ENCODE measurements at regions of chr11 and their contacts with region 1.

Region 1: DNA sequence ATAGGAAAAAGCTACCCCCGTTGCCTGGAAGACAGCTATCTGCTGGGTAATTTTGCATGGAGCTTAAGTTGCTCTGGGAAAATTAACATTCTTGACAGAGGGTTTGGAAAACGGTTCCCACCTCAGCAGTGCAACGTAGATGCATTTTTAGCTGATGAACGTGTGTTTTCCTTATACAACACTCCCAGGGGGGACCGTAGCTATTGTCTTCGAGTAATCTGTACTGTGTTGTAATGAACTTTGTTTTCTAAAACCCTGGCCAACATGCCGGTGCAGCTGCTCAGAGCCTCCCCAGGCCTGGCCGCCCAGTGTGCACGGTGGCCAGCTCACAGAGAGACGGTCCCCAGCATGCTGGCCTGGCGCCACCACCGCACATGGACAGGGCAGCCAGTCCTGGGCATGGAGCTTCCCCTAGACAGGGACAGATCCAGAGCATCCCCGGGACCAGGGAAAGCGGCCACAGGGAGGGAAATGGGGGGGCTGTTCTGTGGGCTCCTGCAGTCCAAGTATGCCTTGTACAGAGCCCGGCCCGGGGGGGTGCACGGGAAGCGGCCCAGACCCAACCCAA is 2.2 kb downstream of the TNNT3 start:
- DNase-seq: no peak
- ATAC-seq: no peak
- H3K4me3 ChIP-seq: no peak overlapping the region
- H3K4me3 Mint-ChIP-seq: no peak overlapping the region
- H3K27ac ChIP-seq: no peak overlapping the region
- H3K27ac Mint-ChIP-seq: no peak overlapping the region
- H3K4me1 ChIP-seq: peaks cover 20% of the 10 kb centered on the region
- H3K4me1 Mint-ChIP-seq: peaks cover 5 to 33% of the 10 kb centered on the region in 2 donors
- H3K27me3 ChIP-seq: peaks cover 2% of the 10 kb centered on the region
- H3K27me3 Mint-ChIP-seq: peaks cover 0 to 12% of the 10 kb centered on the region in 2 donors
- CTCF ChIP-seq: no peak

Region 2: DNA sequence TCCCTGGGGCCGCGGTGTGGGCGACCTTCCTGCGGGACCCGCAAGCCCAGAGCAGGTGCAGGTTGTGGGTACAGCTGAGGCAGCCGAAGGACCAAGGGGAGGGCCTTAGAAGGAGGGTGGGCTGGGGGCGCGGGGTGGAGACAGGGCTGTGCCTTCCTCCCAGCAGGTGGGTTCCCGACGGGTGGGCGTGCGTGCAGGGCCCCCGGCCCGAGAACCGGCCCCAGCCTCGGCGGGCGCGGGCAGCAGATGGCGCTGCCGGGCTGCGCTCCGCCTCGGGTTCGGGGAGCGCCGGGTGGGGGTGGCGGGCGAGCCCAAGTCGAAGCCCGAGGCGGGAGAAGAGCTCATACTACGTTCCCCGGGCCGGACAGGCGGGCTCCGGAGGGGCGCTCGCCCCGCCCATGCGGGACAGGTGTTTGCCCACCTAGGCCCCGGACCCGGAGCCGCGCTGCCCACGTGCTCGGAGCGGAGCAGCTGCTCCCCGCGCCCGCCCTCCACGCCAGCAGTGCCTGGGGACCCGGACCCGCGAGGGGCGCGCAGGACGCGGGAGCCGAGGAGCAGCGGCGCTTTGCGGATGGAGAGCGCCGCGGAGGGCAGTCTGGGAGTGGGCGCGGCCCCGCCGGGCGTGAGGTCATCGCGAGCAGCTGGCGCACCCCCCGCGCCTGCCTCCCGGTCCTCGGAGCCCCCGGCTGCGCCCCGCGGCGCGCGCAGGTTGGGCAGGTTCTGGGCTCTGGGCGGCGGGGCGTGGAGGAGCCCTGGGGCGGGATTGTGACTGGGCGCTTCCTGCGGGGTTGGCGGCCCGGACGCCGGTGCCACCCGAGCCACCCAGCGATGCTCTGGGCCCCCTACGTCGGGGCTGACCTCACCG is 374.9 kb before region 1 on chr11:
- intact Hi-C with region 1: no loop called
- DNase-seq: peak in 1 of 2 donors; percentile 78
- ATAC-seq: peak; percentile 70 to 76 (median 75)
- H3K4me3 ChIP-seq: no peak overlapping the region
- H3K4me3 Mint-ChIP-seq: no peak overlapping the region
- H3K27ac ChIP-seq: no peak overlapping the region
- H3K27ac Mint-ChIP-seq: no peak overlapping the region
- H3K4me1 ChIP-seq: peaks cover 17% of the 10 kb centered on the region
- H3K4me1 Mint-ChIP-seq: no peaks in the 10 kb centered on the region
- H3K27me3 ChIP-seq: peaks cover 17% of the 10 kb centered on the region
- H3K27me3 Mint-ChIP-seq: peaks cover 18 to 27% of the 10 kb centered on the region in 2 donors
- CTCF ChIP-seq: peak; percentile 68

Region 3: GRCh38 chr11:1908618-1909017 is 13.0 kb before region 1 on chr11:
- intact Hi-C with region 1: no loop called
- DNase-seq: no peak
- ATAC-seq: no peak
- H3K4me3 ChIP-seq: no peak overlapping the region
- H3K4me3 Mint-ChIP-seq: no peak overlapping the region
- H3K27ac ChIP-seq: no peak overlapping the region
- H3K27ac Mint-ChIP-seq: no peak overlapping the region
- H3K4me1 ChIP-seq: peaks cover 3% of the 10 kb centered on the region
- H3K4me1 Mint-ChIP-seq: no peaks in the 10 kb centered on the region
- H3K27me3 ChIP-seq: no peaks in the 10 kb centered on the region
- H3K27me3 Mint-ChIP-seq: peaks cover 0 to 13% of the 10 kb centered on the region in 2 donors
- CTCF ChIP-seq: no peak

Region 4: GRCh38 chr11:2214527-2215229 is 293.0 kb after region 1 on chr11:
- intact Hi-C with region 1: loop called (anchors 5 kb)
- DNase-seq: peak in 1 of 2 donors; percentile 14
- ATAC-seq: no peak
- H3K4me3 ChIP-seq: no peak overlapping the region
- H3K4me3 Mint-ChIP-seq: peak overlapping the region; percentile 86
- H3K27ac ChIP-seq: peak overlapping the region; percentile 68
- H3K27ac Mint-ChIP-seq: peak overlapping the region; percentile 84 to 91
- H3K4me1 ChIP-seq: peaks cover 62% of the 10 kb centered on the region
- H3K4me1 Mint-ChIP-seq: peaks cover 32 to 36% of the 10 kb centered on the region in 2 donors
- H3K27me3 ChIP-seq: no peaks in the 10 kb centered on the region
- H3K27me3 Mint-ChIP-seq: no peaks in the 10 kb centered on the region
- CTCF ChIP-seq: no peak